A673 (cell line): ENCODE measurements at regions of chr2 and their contacts with region 1.

Region 1: GRCh38 chr2:216692636-216693413 is 2.5 kb downstream of the IGFBP5 start:
- DNase-seq: peak; percentile 95
- H3K4me3 ChIP-seq: peak overlapping the region; percentile 62
- H3K27ac ChIP-seq: peak overlapping the region; percentile 70
- H3K4me1 ChIP-seq: peaks cover 42% of the 10 kb centered on the region
- H3K27me3 ChIP-seq: no peaks in the 10 kb centered on the region
- CTCF ChIP-seq: no peak

Region 2: GRCh38 chr2:216681683-216682082 is 11.1 kb before region 1 on chr2:
- CTCF ChIA-PET with region 1: interaction called, 23 read pairs
- POLR2A ChIA-PET with region 1: interaction called, 7 read pairs
- intact Hi-C with region 1: no loop called
- DNase-seq: no peak
- H3K4me3 ChIP-seq: no peak overlapping the region
- H3K27ac ChIP-seq: no peak overlapping the region
- H3K4me1 ChIP-seq: peaks cover 6% of the 10 kb centered on the region
- H3K27me3 ChIP-seq: no peaks in the 10 kb centered on the region
- CTCF ChIP-seq: no peak